Gastrocnemius medialis (tissue), 4 donors: ENCODE measurements at regions of chr16 and their contacts with region 1.

Region 1: GRCh38 chr16:31032736-31033708 is at the start of gene STX4:
- DNase-seq: peak; percentile 97 to 98
- ATAC-seq: peak; percentile 91 to 93
- H3K4me3 ChIP-seq: peak within 1 kb of the TSS; percentile 82 to 99 (median 95)
- H3K27ac ChIP-seq: peak within 1 kb of the TSS; percentile 91 to 98 (median 92)
- H3K4me1 ChIP-seq: peaks cover 8 to 14% of the 10 kb centered on the region in 2 donors
- H3K27me3 ChIP-seq: no peaks in the 10 kb centered on the region
- CTCF ChIP-seq: peak in 3 of 5 experiments; percentile 2 to 54 (median 44)
- POLR2A ChIP-seq: peak; percentile 54 to 68
- total RNA-seq, gene STX4: 14.9 to 24.3 (median 21.4) TPM

Region 2: GRCh38 chr16:30813821-30814189 is 219.2 kb before region 1 on chr16:
- in situ Hi-C with region 1: no loop called
- intact Hi-C with region 1: no loop called
- DNase-seq: no peak
- ATAC-seq: peak; percentile 29 to 73
- H3K4me3 ChIP-seq: peak overlapping the region; percentile 57 to 67 (median 62)
- H3K27ac ChIP-seq: peak overlapping the region; percentile 70 to 87 (median 78)
- H3K4me1 ChIP-seq: no peaks in the 10 kb centered on the region
- H3K27me3 ChIP-seq: no peaks in the 10 kb centered on the region
- CTCF ChIP-seq: no peak
- POLR2A ChIP-seq: no peak

Region 3: DNA sequence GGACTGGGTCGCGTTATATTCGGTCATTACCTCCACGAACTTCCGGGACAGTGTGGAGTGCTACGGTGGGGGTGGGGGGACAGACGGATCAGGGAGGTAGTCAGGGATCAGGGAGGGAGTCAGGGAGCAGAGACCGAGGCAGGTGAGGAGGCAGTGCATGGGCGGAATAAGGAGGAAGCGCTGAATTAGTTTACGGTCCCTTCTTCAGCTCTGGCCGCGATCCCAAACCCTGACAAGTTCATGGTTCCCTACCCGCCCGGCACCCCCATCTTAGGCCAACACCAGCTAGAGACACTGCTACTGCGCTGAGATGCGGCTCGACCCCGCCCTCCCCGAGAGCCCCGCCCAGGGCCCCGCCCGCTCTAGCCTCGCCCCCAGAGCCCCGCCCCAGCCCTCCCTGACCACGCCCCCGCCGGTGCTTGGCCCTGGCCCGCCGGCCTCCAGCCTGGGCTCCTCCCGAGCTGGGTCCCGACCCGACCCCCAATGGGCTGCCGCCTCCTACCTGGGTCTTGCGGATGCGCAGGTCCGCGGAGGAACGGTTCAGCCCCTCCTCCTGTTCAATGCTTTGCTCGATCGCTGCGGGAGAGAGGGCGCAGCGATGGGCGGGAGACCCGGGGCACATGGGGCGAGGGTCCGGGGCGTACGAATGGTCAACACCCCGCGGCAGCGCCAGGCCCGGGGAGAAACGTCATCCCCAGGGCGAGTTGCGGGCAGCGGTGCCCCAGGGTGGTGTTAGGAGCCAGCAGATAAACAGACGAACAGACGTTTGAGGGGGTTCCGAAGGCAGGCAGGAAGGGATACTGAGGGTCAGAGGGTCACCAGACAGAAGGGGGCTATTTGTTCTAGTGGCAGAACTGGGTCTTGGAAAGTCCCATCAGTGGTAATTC is 35.8 kb before region 1 on chr16:
- in situ Hi-C with region 1: no loop called
- intact Hi-C with region 1: loop called (anchors 2 kb)
- DNase-seq: peak; percentile 67 to 71
- ATAC-seq: peak; percentile 89 to 90
- H3K4me3 ChIP-seq: peak overlapping the region; percentile 53 to 96 (median 66)
- H3K27ac ChIP-seq: peak overlapping the region; percentile 63 to 78 (median 76)
- H3K4me1 ChIP-seq: peaks cover 0 to 12% of the 10 kb centered on the region in 2 donors
- H3K27me3 ChIP-seq: peaks cover 0 to 8% (median 3%) of the 10 kb centered on the region in 3 donors
- CTCF ChIP-seq: no peak
- POLR2A ChIP-seq: peak; percentile 47 to 57

Region 4: GRCh38 chr16:31064882-31065461 is 31.9 kb after region 1 on chr16:
- in situ Hi-C with region 1: no loop called
- intact Hi-C with region 1: no loop called
- DNase-seq: peak; percentile 38 to 83
- ATAC-seq: peak; percentile 90 to 98
- H3K4me3 ChIP-seq: no peak overlapping the region
- H3K27ac ChIP-seq: peak overlapping the region; percentile 51 to 78 (median 57)
- H3K4me1 ChIP-seq: peaks cover 3 to 11% of the 10 kb centered on the region in 2 donors
- H3K27me3 ChIP-seq: no peaks in the 10 kb centered on the region
- CTCF ChIP-seq: no peak
- POLR2A ChIP-seq: no peak